Esophagus muscularis mucosa (tissue), 4 donors: ENCODE measurements at regions of chr18 and their contacts with region 1.

Region 1: GRCh38 chr18:44679056-44679905 is 1.4 kb upstream of the SETBP1 start:
- DNase-seq: peak; percentile 97
- H3K4me3 ChIP-seq: peak overlapping the region; percentile 85 to 94 (median 92)
- H3K27ac ChIP-seq: peak overlapping the region; percentile 97 to 98 (median 98)
- H3K4me1 ChIP-seq: peaks cover 9 to 39% (median 34%) of the 10 kb centered on the region in 4 donors
- H3K27me3 ChIP-seq: no peaks in the 10 kb centered on the region
- CTCF ChIP-seq: peak; percentile 67 to 69 (median 68)
- EP300 ChIP-seq: no peak
- POLR2A ChIP-seq: peak; percentile 75

Region 2: DNA sequence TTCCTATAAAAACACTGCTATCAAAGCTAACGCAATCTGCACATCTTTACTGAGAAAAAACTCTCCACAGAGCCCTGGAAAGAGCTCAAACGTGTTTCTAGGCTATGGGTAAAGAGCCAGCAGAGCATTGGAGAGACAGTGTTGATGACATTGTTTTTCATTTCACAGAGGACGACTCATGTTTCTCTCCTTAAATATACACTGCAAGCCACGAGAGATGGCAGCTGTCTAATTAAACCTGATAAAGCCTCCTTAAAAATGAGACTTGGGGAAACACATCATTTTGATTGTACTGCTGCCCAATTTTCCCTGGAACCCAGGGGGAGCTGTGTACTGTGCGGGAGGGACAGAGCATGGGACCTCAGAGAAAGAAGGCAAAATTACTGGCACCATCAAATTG is 292.9 kb before region 1 on chr18:
- intact Hi-C with region 1: loop called (anchors 10 kb)
- DNase-seq: no peak
- H3K4me3 ChIP-seq: no peak overlapping the region
- H3K27ac ChIP-seq: no peak overlapping the region
- H3K4me1 ChIP-seq: peaks cover 0 to 19% (median 15%) of the 10 kb centered on the region in 4 donors
- H3K27me3 ChIP-seq: no peaks in the 10 kb centered on the region
- CTCF ChIP-seq: peak in 2 of 3 experiments; percentile 13
- EP300 ChIP-seq: no peak
- POLR2A ChIP-seq: no peak

Region 3: DNA sequence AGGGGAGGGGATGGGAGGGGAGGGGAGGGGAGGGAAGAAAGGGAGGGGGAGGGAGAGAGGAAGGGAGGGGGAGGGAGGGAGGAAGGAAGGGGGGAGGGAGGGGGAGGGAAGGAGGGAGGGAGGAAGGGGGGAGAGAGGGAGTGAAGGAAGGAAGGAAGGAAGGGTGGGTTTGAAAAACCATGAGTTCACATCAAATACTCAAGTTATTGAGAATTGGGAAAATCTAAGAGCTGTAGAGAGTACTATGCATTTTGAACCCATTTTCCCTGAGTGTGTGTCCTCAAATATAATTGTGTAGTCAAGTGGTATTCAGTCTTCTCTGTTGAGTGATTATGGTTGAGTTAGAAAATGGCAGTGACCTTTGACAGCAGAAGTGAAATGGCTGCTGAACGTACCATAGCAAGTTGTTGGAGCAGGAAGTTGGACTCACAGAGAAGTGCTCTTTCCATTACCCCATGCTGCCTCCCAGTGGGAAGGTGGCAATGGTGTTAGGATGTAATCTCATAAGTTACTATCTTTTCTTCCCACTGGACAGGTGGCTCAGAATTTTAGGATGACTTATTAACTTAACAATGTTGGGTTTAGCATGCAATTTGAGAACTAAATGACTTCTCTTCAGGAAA is 216.0 kb after region 1 on chr18:
- intact Hi-C with region 1: loop called (anchors 5 kb)
- DNase-seq: no peak
- H3K4me3 ChIP-seq: no peak overlapping the region
- H3K27ac ChIP-seq: no peak overlapping the region
- H3K4me1 ChIP-seq: peaks cover 5 to 28% (median 24%) of the 10 kb centered on the region in 4 donors
- H3K27me3 ChIP-seq: no peaks in the 10 kb centered on the region
- CTCF ChIP-seq: peak; percentile 19 to 54 (median 32)
- EP300 ChIP-seq: no peak
- POLR2A ChIP-seq: no peak

Region 4: GRCh38 chr18:45212181-45213039 is 533.1 kb after region 1 on chr18:
- intact Hi-C with region 1: loop called (anchors 5 kb)
- DNase-seq: no peak
- H3K4me3 ChIP-seq: no peak overlapping the region
- H3K27ac ChIP-seq: no peak overlapping the region
- H3K4me1 ChIP-seq: no peaks in the 10 kb centered on the region
- H3K27me3 ChIP-seq: no peaks in the 10 kb centered on the region
- CTCF ChIP-seq: peak; percentile 66 to 92 (median 74)
- EP300 ChIP-seq: no peak
- POLR2A ChIP-seq: no peak

Region 5: GRCh38 chr18:45384137-45384961 is 705.1 kb after region 1 on chr18:
- intact Hi-C with region 1: loop called (anchors 10 kb)
- DNase-seq: no peak
- H3K4me3 ChIP-seq: no peak overlapping the region
- H3K27ac ChIP-seq: no peak overlapping the region
- H3K4me1 ChIP-seq: peaks cover 2 to 8% (median 4%) of the 10 kb centered on the region in 4 donors
- H3K27me3 ChIP-seq: no peaks in the 10 kb centered on the region
- CTCF ChIP-seq: peak; percentile 47 to 60 (median 51)
- EP300 ChIP-seq: no peak
- POLR2A ChIP-seq: no peak

Region 6: GRCh38 chr18:45526114-45526841 is 847.0 kb after region 1 on chr18:
- intact Hi-C with region 1: loop called (anchors 10 kb)
- DNase-seq: no peak
- H3K4me3 ChIP-seq: no peak overlapping the region
- H3K27ac ChIP-seq: peak overlapping the region in 2 of 4 donors; percentile 4 to 6
- H3K4me1 ChIP-seq: peaks cover 5 to 34% (median 31%) of the 10 kb centered on the region in 4 donors
- H3K27me3 ChIP-seq: no peaks in the 10 kb centered on the region
- CTCF ChIP-seq: peak; percentile 28 to 34 (median 30)
- EP300 ChIP-seq: no peak
- POLR2A ChIP-seq: no peak